Naive thymus-derived CD4-positive, alpha-beta T cell (primary cell): ENCODE measurements at regions of chr1 and their contacts with region 1.

Region 1: GRCh38 chr1:164786980-164787833 is 228.2 kb downstream of the PBX1 start:
- DNase-seq: peak; percentile 17 to 54 (median 40)
- ATAC-seq: peak; percentile 84
- H3K4me3 ChIP-seq: no peak overlapping the region
- H3K4me3 Mint-ChIP-seq: peak overlapping the region in 1 of 10 donors; percentile 41
- H3K27ac ChIP-seq: no peak overlapping the region
- H3K27ac Mint-ChIP-seq: no peak overlapping the region
- H3K4me1 ChIP-seq: no peaks in the 10 kb centered on the region
- H3K4me1 Mint-ChIP-seq: peaks cover 0 to 10% (median 4%) of the 10 kb centered on the region in 7 donors
- H3K27me3 ChIP-seq: no peaks in the 10 kb centered on the region
- H3K27me3 Mint-ChIP-seq: peaks cover 0 to 25% (median 13%) of the 10 kb centered on the region in 5 donors

Region 2: GRCh38 chr1:162854245-162854882 is 1932.8 kb before region 1 on chr1:
- CTCF ChIA-PET with region 1: no interaction called
- POLR2A ChIA-PET with region 1: no interaction called
- intact Hi-C with region 1: loop called in 1 of 2 experiments (anchors 5 kb)
- DNase-seq: peak in 6 of 9 donors; percentile 17 to 35 (median 24)
- ATAC-seq: peak; percentile 67
- H3K4me3 ChIP-seq: no peak overlapping the region
- H3K4me3 Mint-ChIP-seq: no peak overlapping the region
- H3K27ac ChIP-seq: no peak overlapping the region
- H3K27ac Mint-ChIP-seq: no peak overlapping the region
- H3K4me1 ChIP-seq: no peaks in the 10 kb centered on the region
- H3K4me1 Mint-ChIP-seq: peaks cover 0 to 4% (median 0%) of the 10 kb centered on the region in 7 donors
- H3K27me3 ChIP-seq: no peaks in the 10 kb centered on the region
- H3K27me3 Mint-ChIP-seq: peaks cover 0 to 20% (median 11%) of the 10 kb centered on the region in 5 donors

Region 3: GRCh38 chr1:163410073-163410999 is 1376.9 kb before region 1 on chr1:
- CTCF ChIA-PET with region 1: interaction called, 3 read pairs
- POLR2A ChIA-PET with region 1: no interaction called
- intact Hi-C with region 1: loop called in 1 of 2 experiments (anchors 1 kb)
- DNase-seq: peak in 3 of 9 donors; percentile 1 to 5 (median 4)
- ATAC-seq: no peak
- H3K4me3 ChIP-seq: no peak overlapping the region
- H3K4me3 Mint-ChIP-seq: no peak overlapping the region
- H3K27ac ChIP-seq: no peak overlapping the region
- H3K27ac Mint-ChIP-seq: no peak overlapping the region
- H3K4me1 ChIP-seq: no peaks in the 10 kb centered on the region
- H3K4me1 Mint-ChIP-seq: peaks cover 0 to 8% (median 6%) of the 10 kb centered on the region in 7 donors
- H3K27me3 ChIP-seq: no peaks in the 10 kb centered on the region
- H3K27me3 Mint-ChIP-seq: peaks cover 2 to 29% (median 15%) of the 10 kb centered on the region in 5 donors

Region 4: DNA sequence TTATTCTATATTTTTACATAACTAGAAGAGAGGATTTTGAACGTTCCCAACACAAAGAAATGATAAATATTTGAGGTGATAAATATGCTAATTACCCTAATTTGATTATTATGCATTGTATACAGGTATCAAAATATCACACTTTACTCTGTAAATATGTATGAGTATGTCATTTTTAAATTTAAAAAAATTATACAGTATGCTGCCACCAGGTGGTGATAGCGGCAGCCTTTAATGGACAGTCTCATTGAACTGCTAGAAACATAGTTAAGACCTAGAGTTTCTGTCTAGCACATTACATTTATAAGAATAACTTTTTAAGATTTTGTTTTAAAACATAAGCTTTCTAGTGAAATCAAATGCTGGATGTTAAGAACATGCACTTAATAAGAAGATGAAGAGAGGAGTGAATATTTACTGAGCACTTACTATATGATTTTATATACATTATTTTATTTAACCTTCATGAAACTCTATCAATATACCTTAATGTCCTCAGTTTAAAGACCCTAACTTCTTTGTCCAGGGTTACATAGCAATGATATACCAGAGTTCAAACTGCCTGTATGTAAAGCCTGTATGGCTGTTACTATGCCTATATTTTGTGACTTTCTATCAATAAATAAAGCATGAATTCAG is 1258.4 kb before region 1 on chr1:
- CTCF ChIA-PET with region 1: no interaction called
- POLR2A ChIA-PET with region 1: no interaction called
- intact Hi-C with region 1: loop called in 1 of 2 experiments (anchors 1 kb)
- DNase-seq: no peak
- ATAC-seq: no peak
- H3K4me3 ChIP-seq: no peak overlapping the region
- H3K4me3 Mint-ChIP-seq: no peak overlapping the region
- H3K27ac ChIP-seq: no peak overlapping the region
- H3K27ac Mint-ChIP-seq: no peak overlapping the region
- H3K4me1 ChIP-seq: no peaks in the 10 kb centered on the region
- H3K4me1 Mint-ChIP-seq: no peaks in the 10 kb centered on the region
- H3K27me3 ChIP-seq: no peaks in the 10 kb centered on the region
- H3K27me3 Mint-ChIP-seq: peaks cover 0 to 6% (median 0%) of the 10 kb centered on the region in 5 donors

Region 5: GRCh38 chr1:164092603-164093353 is 694.4 kb before region 1 on chr1:
- CTCF ChIA-PET with region 1: no interaction called
- POLR2A ChIA-PET with region 1: no interaction called
- intact Hi-C with region 1: loop called in 1 of 2 experiments (anchors 5 kb)
- DNase-seq: no peak
- ATAC-seq: no peak
- H3K4me3 ChIP-seq: no peak overlapping the region
- H3K4me3 Mint-ChIP-seq: no peak overlapping the region
- H3K27ac ChIP-seq: no peak overlapping the region
- H3K27ac Mint-ChIP-seq: no peak overlapping the region
- H3K4me1 ChIP-seq: no peaks in the 10 kb centered on the region
- H3K4me1 Mint-ChIP-seq: no peaks in the 10 kb centered on the region
- H3K27me3 ChIP-seq: no peaks in the 10 kb centered on the region
- H3K27me3 Mint-ChIP-seq: no peaks in the 10 kb centered on the region